ENCODE measurements at regions of chr17 and their contacts with region 1.

Region 1: DNA sequence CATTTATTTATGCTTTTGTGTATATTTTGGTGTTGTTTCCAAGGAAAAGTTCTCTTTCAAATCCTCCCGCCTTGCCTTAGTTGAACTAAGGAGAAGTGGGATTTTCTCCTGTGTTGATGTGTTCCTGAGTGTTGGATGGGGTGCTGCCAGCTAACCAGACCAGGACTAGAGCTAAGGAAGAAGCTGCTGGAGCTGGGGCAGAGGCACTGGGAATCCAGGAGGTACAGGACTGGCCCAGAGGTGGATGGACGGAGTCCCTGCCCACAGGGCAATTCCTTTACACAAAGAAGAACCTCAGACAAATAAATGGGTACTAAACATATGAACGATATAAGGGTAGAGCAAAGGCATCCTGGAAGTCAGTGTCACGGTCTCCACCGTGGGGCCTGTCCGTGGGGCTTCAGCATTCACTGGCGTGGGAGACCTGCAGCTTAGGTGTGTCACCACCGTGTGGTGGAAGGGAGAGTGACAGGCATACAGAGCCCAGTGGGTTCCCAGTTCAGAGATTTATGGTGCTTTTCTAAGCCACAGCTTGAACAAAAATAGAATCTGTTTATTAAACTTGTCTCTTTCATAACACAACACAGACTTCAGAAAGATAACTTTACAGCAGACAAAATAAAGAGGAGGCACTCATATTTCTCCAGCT is 270.7 kb downstream of the NTN1 start:
- DNase-seq: peak; percentile 66
- H3K4me3 Mint-ChIP-seq: no peak overlapping the region
- H3K27ac Mint-ChIP-seq: no peak overlapping the region
- H3K4me1 Mint-ChIP-seq: peaks cover 28% of the 10 kb centered on the region
- H3K27me3 Mint-ChIP-seq: no peaks in the 10 kb centered on the region

Region 2: GRCh38 chr17:8991514-8992285 is 300.3 kb before region 1 on chr17:
- CTCF ChIA-PET with region 1: no interaction called
- POLR2A ChIA-PET with region 1: no interaction called
- intact Hi-C with region 1: loop called (anchors 10 kb)
- DNase-seq: peak; percentile 80
- H3K4me3 Mint-ChIP-seq: no peak overlapping the region
- H3K27ac Mint-ChIP-seq: no peak overlapping the region
- H3K4me1 Mint-ChIP-seq: peaks cover 3% of the 10 kb centered on the region
- H3K27me3 Mint-ChIP-seq: peaks cover 4% of the 10 kb centered on the region

Region 3: DNA sequence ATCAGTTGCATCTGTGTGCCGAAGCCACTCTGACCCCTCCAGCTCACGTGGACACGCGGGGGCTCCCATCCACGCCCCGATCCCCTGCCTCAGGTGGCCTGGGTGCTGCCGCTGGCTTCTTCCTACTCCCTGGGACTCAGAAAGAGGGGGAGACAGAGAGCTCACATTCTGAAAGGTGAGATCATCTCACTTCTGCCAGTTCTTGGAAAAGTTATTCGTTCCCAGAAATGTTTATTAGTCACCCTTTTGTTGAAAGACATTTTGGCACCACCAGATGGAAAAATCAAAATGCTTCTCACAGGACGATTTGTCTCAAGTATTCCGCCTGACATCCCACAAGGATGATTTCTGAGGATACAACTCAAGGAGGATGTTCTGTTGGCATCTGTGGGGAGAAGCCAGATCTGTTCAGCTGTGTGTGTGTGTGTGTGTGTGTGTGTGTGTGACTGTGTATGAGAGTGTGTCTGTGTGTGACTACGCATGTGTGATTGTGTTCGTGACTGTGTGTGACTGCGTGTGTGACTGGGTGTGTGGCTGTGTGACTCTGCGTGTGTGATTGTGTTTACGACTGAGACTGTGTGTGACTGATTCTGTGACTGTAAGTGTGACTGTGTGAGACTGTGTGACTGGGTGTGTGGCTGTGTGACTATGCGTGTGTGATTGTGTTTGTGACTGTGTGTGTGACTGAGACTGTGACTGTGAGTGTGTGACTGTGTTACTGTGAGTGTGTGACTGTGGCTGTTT is 63.5 kb before region 1 on chr17:
- CTCF ChIA-PET with region 1: interaction called, 3 read pairs
- POLR2A ChIA-PET with region 1: no interaction called
- intact Hi-C with region 1: loop called (anchors 5 kb)
- DNase-seq: no peak
- H3K4me3 Mint-ChIP-seq: no peak overlapping the region
- H3K27ac Mint-ChIP-seq: no peak overlapping the region
- H3K4me1 Mint-ChIP-seq: peaks cover 3% of the 10 kb centered on the region
- H3K27me3 Mint-ChIP-seq: no peaks in the 10 kb centered on the region

Region 4: GRCh38 chr17:9273428-9274391 is 18.3 kb before region 1 on chr17:
- CTCF ChIA-PET with region 1: interaction called, 18 read pairs
- POLR2A ChIA-PET with region 1: interaction called, 14 read pairs
- intact Hi-C with region 1: loop called (anchors 1 kb)
- DNase-seq: peak; percentile 67
- H3K4me3 Mint-ChIP-seq: no peak overlapping the region
- H3K27ac Mint-ChIP-seq: peak overlapping the region; percentile 76
- H3K4me1 Mint-ChIP-seq: peaks cover 22% of the 10 kb centered on the region
- H3K27me3 Mint-ChIP-seq: no peaks in the 10 kb centered on the region

Region 5: GRCh38 chr17:9529033-9529700 is 237.1 kb after region 1 on chr17:
- CTCF ChIA-PET with region 1: interaction called, 3 read pairs
- POLR2A ChIA-PET with region 1: no interaction called
- intact Hi-C with region 1: loop called (anchors 1 kb)
- DNase-seq: no peak
- H3K4me3 Mint-ChIP-seq: no peak overlapping the region
- H3K27ac Mint-ChIP-seq: no peak overlapping the region
- H3K4me1 Mint-ChIP-seq: peaks cover 13% of the 10 kb centered on the region
- H3K27me3 Mint-ChIP-seq: no peaks in the 10 kb centered on the region